ENCODE measurements at regions of chr16 and their contacts with region 1.

Region 1: DNA sequence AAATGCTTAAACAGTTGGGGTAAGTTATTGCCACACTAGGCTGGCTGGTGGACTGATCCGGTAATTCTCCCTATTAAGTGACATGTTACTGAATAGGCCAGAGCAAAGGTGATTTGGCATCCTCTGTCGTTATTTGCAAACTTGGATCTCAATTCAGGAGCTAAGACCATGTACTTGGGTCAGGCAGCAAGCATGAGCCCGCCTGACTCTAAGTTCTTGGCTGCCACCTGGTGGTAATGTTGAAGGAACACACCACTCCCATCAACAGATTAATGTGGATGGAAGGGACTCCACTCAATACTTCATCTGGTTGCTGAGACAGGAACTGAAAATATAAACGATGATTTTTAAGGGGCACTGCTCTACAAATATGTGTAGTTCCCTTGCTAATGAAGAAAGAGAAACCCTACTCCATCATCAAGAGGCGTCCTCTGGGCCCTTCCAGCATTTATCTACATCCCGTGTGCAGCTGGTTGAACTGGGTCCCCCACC is 70.8 kb downstream of the EMP2 start:
- DNase-seq: no peak
- H3K4me3 ChIP-seq: no peak overlapping the region
- H3K27ac ChIP-seq: no peak overlapping the region
- H3K4me1 ChIP-seq: peaks cover 5 to 6% (median 5%) of the 10 kb centered on the region in 4 donors
- H3K27me3 ChIP-seq: no peaks in the 10 kb centered on the region
- CTCF ChIP-seq: peak; percentile 71 to 86 (median 82)
- EP300 ChIP-seq: no peak
- POLR2A ChIP-seq: no peak

Region 2: DNA sequence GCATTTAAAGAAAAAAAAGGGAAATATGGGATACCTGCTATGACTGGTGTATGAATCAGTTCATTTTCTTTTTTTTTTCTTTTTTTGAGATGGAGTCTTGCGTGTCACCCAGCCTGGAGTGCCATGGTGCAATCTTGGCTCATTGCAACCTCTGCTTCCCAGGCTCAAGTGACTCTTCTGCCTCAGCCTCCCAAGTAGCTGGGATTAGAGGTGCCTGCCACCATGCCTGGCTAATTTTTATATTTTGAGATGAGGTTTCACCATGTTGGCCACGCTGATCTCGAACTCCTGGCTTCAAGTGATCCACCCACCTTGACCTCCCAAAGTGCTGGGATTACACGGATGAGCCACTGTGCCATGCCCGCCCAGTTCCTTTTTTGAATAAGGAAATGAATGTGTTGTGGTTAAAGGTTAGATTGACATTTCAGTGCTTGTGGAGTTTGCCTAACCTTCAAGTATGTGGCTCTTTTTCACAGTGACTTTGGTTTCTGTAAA is 1410.4 kb before region 1 on chr16:
- intact Hi-C with region 1: no loop called
- DNase-seq: no peak
- H3K4me3 ChIP-seq: no peak overlapping the region
- H3K27ac ChIP-seq: peak overlapping the region; percentile 8 to 54 (median 25)
- H3K4me1 ChIP-seq: peaks cover 97 to 100% (median 100%) of the 10 kb centered on the region in 4 donors
- H3K27me3 ChIP-seq: no peaks in the 10 kb centered on the region
- CTCF ChIP-seq: no peak
- EP300 ChIP-seq: no peak
- POLR2A ChIP-seq: no peak

Region 3: GRCh38 chr16:10256784-10257641 is 252.6 kb before region 1 on chr16:
- intact Hi-C with region 1: loop called (anchors 2 kb)
- DNase-seq: no peak
- H3K4me3 ChIP-seq: no peak overlapping the region
- H3K27ac ChIP-seq: no peak overlapping the region
- H3K4me1 ChIP-seq: peaks cover 0 to 5% (median 0%) of the 10 kb centered on the region in 4 donors
- H3K27me3 ChIP-seq: peaks cover 0 to 30% (median 0%) of the 10 kb centered on the region in 4 donors
- CTCF ChIP-seq: peak; percentile 49 to 82 (median 64)
- EP300 ChIP-seq: no peak
- POLR2A ChIP-seq: no peak

Region 4: GRCh38 chr16:10314811-10315210 is 194.8 kb before region 1 on chr16:
- intact Hi-C with region 1: loop called (anchors 2 kb)
- DNase-seq: no peak
- H3K4me3 ChIP-seq: no peak overlapping the region
- H3K27ac ChIP-seq: no peak overlapping the region
- H3K4me1 ChIP-seq: no peaks in the 10 kb centered on the region
- H3K27me3 ChIP-seq: no peaks in the 10 kb centered on the region
- CTCF ChIP-seq: no peak
- EP300 ChIP-seq: no peak
- POLR2A ChIP-seq: no peak

Measured in esophagus muscularis mucosa (tissue), 4 donors.